Mammary epithelial cell (primary cell): ENCODE measurements at regions of chr21 and their contacts with region 1.

Region 1: DNA sequence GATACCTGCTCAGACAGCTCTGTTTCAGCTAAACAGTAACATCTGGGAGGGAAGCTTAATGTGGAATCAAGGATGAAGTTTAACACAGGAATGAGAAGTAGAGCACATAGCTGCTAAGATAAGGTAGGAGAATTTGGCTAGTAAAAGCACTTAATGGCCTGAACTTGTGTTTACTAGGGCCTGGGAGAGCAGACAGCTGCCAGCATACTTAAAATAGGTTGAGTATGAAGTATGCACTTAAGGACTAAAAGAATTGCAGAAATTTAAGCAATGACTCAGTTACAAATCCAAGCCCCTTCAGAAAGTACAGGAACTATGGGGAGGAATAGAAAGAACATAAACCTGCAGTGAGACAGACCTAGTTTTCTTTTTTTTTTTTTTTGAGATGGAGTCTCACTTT is 53.0 kb downstream of the BACH1 start:
- DNase-seq: no peak
- H3K4me3 ChIP-seq: no peak overlapping the region
- H3K27ac ChIP-seq: no peak overlapping the region
- H3K4me1 ChIP-seq: peaks cover 17% of the 10 kb centered on the region
- H3K27me3 ChIP-seq: no peaks in the 10 kb centered on the region
- CTCF ChIP-seq: no peak

Region 2: GRCh38 chr21:29098156-29098555 is 253.5 kb before region 1 on chr21:
- CTCF ChIA-PET with region 1: no interaction called
- dilution Hi-C with region 1: loop called (anchors 5 kb)
- in situ Hi-C with region 1: no loop called
- intact Hi-C with region 1: no loop called
- DNase-seq: no peak
- H3K4me3 ChIP-seq: no peak overlapping the region
- H3K27ac ChIP-seq: no peak overlapping the region
- H3K4me1 ChIP-seq: no peaks in the 10 kb centered on the region
- H3K27me3 ChIP-seq: no peaks in the 10 kb centered on the region
- CTCF ChIP-seq: no peak